ENCODE measurements at regions of chr19 and their contacts with region 1.

Region 1: GRCh38 chr19:10380313-10381102 is at the start of gene TYK2:
- ATAC-seq: peak; percentile 92 to 98 (median 95)
- H3K4me3 ChIP-seq: peak within 1 kb of the TSS; percentile 77 to 99 (median 83)
- H3K27ac ChIP-seq: peak within 1 kb of the TSS; percentile 81 to 95
- H3K4me1 ChIP-seq: peaks cover 10 to 11% of the 10 kb centered on the region in 2 donors
- total RNA-seq, gene TYK2: 29.4 to 110 (median 62.1) TPM

Region 2: GRCh38 chr19:10251792-10252694 is 128.5 kb before region 1 on chr19 and contains the start of gene MRPL4:
- in situ Hi-C with region 1: loop called in 1 of 9 experiments (anchors 25 kb)
- ATAC-seq: peak; percentile 93 to 97 (median 94)
- H3K4me3 ChIP-seq: peak within 1 kb of the TSS; percentile 64 to 94 (median 84)
- H3K27ac ChIP-seq: peak within 1 kb of the TSS; percentile 87 to 92
- H3K4me1 ChIP-seq: peaks cover 5 to 7% of the 10 kb centered on the region in 2 donors
- total RNA-seq, gene MRPL4: 17.9 to 80.5 (median 34.4) TPM

Region 3: DNA sequence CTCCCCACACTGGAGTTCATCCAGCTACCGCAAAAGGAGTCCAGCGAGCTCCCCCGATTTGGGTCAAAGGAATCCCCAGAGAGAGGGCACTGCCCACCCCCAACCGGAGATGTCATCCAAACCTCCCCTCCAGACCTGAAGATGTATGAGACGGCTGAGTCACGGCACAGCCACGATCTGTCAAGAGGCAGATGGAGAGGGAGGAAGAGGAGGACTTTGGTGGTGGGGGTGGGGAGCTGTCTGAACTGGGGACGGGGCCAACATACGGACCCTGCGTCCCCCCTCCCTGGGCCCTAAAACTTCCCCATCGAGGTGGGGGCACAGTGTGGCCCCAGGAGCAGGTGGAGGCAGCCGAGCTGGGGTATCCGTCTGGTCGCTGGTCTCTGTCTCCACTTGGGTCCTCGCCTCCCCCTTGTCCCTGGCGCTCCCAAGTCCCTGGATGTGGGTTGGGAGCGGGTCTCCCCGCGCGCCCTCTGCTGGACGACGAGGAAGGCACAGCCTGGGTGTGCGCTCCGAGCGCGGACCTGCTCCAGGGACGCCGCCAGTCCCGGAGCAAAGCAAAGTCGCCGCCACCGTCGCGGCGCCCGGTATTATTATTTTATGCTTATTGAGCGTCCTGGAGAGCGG is 43.6 kb after region 1 on chr19:
- in situ Hi-C with region 1: no loop called
- ATAC-seq: peak; percentile 62 to 77 (median 73)
- H3K4me3 ChIP-seq: peak overlapping the region in 2 of 5 donors; percentile 5 to 10
- H3K27ac ChIP-seq: no peak overlapping the region
- H3K4me1 ChIP-seq: peaks cover 11 to 13% of the 10 kb centered on the region in 2 donors